CD8-positive, alpha-beta T cell (primary cell): ENCODE measurements at regions of chr5 and their contacts with region 1.

Region 1: DNA sequence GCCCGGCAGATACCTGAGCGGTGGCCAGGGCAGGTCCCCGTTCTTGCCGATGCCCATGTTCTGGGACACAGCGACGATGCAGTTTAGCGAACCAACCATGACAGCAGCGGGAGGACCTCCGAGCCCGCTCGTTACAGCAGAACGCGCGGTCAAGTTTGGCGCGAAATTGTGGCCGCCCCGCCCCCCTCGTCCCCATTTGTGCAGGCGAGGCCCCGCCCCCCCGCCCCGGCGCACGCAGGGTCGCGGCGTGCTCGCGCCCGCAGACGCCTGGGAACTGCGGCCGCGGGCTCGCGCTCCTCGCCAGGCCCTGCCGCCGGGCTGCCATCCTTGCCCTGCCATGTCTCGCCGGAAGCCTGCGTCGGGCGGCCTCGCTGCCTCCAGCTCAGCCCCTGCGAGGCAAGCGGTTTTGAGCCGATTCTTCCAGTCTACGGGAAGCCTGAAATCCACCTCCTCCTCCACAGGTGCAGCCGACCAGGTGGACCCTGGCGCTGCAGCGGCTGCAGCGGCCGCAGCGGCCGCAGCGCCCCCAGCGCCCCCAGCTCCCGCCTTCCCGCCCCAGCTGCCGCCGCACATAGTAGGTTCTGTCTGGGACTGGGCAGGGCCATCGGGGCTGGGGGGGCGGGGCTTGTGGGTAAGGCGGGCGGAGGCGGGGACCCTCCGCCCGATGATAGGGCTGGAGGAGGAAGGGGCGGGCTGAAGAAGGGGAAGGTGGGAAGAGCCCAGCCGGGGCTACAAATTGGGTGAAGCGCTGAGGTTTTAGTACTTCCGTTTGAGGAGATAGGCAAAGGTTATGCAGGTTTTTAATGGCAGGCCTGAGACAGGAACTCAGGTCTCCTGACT is at the starts of genes DHFR and MSH3:
- DNase-seq: peak; percentile 78 to 96 (median 90)
- ATAC-seq: peak; percentile 76
- H3K4me3 ChIP-seq: peak within 1 kb of the TSS; percentile 66 to 83
- H3K4me3 Mint-ChIP-seq: peak within 1 kb of the TSS; percentile 87
- H3K27ac ChIP-seq: peak within 1 kb of the TSS; percentile 71 to 89
- H3K27ac Mint-ChIP-seq: peak within 1 kb of the TSS; percentile 96
- H3K4me1 ChIP-seq: peaks cover 27% of the 10 kb centered on the region
- H3K4me1 Mint-ChIP-seq: peaks cover 27% of the 10 kb centered on the region
- H3K27me3 ChIP-seq: no peaks in the 10 kb centered on the region
- H3K27me3 Mint-ChIP-seq: no peaks in the 10 kb centered on the region
- CTCF ChIP-seq: no peak
- total RNA-seq, gene DHFR: 5.9 TPM
- total RNA-seq, gene MSH3: 8.5 to 8.6 TPM

Region 2: GRCh38 chr5:79514391-79515105 is 1140.1 kb before region 1 on chr5:
- CTCF ChIA-PET with region 1: no interaction called
- POLR2A ChIA-PET with region 1: interaction called, 3 read pairs
- intact Hi-C with region 1: loop called (anchors 2 to 10 kb)
- DNase-seq: peak; percentile 80 to 98 (median 92)
- ATAC-seq: peak; percentile 84
- H3K4me3 ChIP-seq: peak overlapping the region; percentile 62 to 73
- H3K4me3 Mint-ChIP-seq: peak overlapping the region; percentile 99
- H3K27ac ChIP-seq: peak overlapping the region; percentile 91 to 97
- H3K27ac Mint-ChIP-seq: peak overlapping the region; percentile 99
- H3K4me1 ChIP-seq: peaks cover 19% of the 10 kb centered on the region
- H3K4me1 Mint-ChIP-seq: peaks cover 42% of the 10 kb centered on the region
- H3K27me3 ChIP-seq: peaks cover 6 to 7% of the 10 kb centered on the region in 2 experiments
- H3K27me3 Mint-ChIP-seq: peaks cover 5% of the 10 kb centered on the region
- CTCF ChIP-seq: peak; percentile 13

Region 3: GRCh38 chr5:80255732-80256479 is 398.7 kb before region 1 on chr5 and contains the start of gene SERINC5:
- CTCF ChIA-PET with region 1: no interaction called
- POLR2A ChIA-PET with region 1: no interaction called
- intact Hi-C with region 1: loop called in 1 of 2 experiments (anchors 1 kb)
- DNase-seq: peak; percentile 69 to 92 (median 83)
- ATAC-seq: peak; percentile 74
- H3K4me3 ChIP-seq: peak within 1 kb of the TSS; percentile 83 to 91
- H3K4me3 Mint-ChIP-seq: peak within 1 kb of the TSS; percentile 99
- H3K27ac ChIP-seq: peak within 1 kb of the TSS; percentile 89 to 94
- H3K27ac Mint-ChIP-seq: peak within 1 kb of the TSS; percentile 99
- H3K4me1 ChIP-seq: peaks cover 36% of the 10 kb centered on the region
- H3K4me1 Mint-ChIP-seq: peaks cover 57% of the 10 kb centered on the region
- H3K27me3 ChIP-seq: no peaks in the 10 kb centered on the region
- H3K27me3 Mint-ChIP-seq: no peaks in the 10 kb centered on the region
- CTCF ChIP-seq: no peak
- total RNA-seq, gene SERINC5: 112 to 117 TPM

Region 4: GRCh38 chr5:80672140-80672736 is 17.6 kb after region 1 on chr5:
- CTCF ChIA-PET with region 1: interaction called, 6 read pairs
- POLR2A ChIA-PET with region 1: interaction called, 5 read pairs
- intact Hi-C with region 1: loop called (anchors 2 kb)
- DNase-seq: peak in 8 of 9 experiments; percentile 38 to 75 (median 66)
- ATAC-seq: peak; percentile 84
- H3K4me3 ChIP-seq: no peak overlapping the region
- H3K4me3 Mint-ChIP-seq: no peak overlapping the region
- H3K27ac ChIP-seq: no peak overlapping the region
- H3K27ac Mint-ChIP-seq: no peak overlapping the region
- H3K4me1 ChIP-seq: no peaks in the 10 kb centered on the region
- H3K4me1 Mint-ChIP-seq: peaks cover 4% of the 10 kb centered on the region
- H3K27me3 ChIP-seq: no peaks in the 10 kb centered on the region
- H3K27me3 Mint-ChIP-seq: no peaks in the 10 kb centered on the region
- CTCF ChIP-seq: peak; percentile 88

Region 5: DNA sequence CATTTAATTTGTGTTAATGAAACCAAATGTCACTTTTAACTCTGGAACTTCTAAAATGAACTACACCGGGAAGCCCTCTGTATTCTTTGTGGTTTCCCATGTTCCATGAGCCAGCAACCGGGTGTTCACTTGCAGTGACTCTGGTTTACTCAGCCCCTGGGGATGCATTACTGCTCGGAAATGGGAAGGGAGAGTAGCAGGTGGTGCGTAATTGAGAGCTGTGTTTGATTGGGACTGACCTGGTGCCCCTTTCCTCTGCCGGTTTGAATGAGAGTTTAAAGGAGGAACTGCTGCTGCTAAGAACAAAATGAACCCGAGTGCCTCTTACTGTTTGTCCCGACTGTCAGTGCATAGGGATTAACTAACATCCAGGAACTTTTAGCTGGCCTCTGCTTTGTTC is 100.3 kb after region 1 on chr5:
- CTCF ChIA-PET with region 1: no interaction called
- POLR2A ChIA-PET with region 1: no interaction called
- intact Hi-C with region 1: no loop called
- DNase-seq: peak in 1 of 9 experiments; percentile 9
- ATAC-seq: no peak
- H3K4me3 ChIP-seq: peak overlapping the region in 1 of 2 experiments; percentile 15
- H3K4me3 Mint-ChIP-seq: peak overlapping the region; percentile 75
- H3K27ac ChIP-seq: peak overlapping the region; percentile 20 to 80
- H3K27ac Mint-ChIP-seq: peak overlapping the region; percentile 90
- H3K4me1 ChIP-seq: peaks cover 32% of the 10 kb centered on the region
- H3K4me1 Mint-ChIP-seq: peaks cover 54% of the 10 kb centered on the region
- H3K27me3 ChIP-seq: no peaks in the 10 kb centered on the region
- H3K27me3 Mint-ChIP-seq: no peaks in the 10 kb centered on the region
- CTCF ChIP-seq: no peak

Region 6: GRCh38 chr5:81301271-81302015 is 646.8 kb after region 1 on chr5 and contains the start of gene ZCCHC9:
- CTCF ChIA-PET with region 1: no interaction called
- POLR2A ChIA-PET with region 1: interaction called, 6 read pairs
- intact Hi-C with region 1: loop called (anchors 1 to 5 kb)
- DNase-seq: peak; percentile 85 to 98 (median 94)
- ATAC-seq: peak; percentile 87
- H3K4me3 ChIP-seq: peak within 1 kb of the TSS; percentile 75 to 91
- H3K4me3 Mint-ChIP-seq: peak within 1 kb of the TSS; percentile 93
- H3K27ac ChIP-seq: peak within 1 kb of the TSS; percentile 79 to 87
- H3K27ac Mint-ChIP-seq: peak within 1 kb of the TSS; percentile 97
- H3K4me1 ChIP-seq: peaks cover 31% of the 10 kb centered on the region
- H3K4me1 Mint-ChIP-seq: peaks cover 60% of the 10 kb centered on the region
- H3K27me3 ChIP-seq: no peaks in the 10 kb centered on the region
- H3K27me3 Mint-ChIP-seq: no peaks in the 10 kb centered on the region
- CTCF ChIP-seq: no peak
- total RNA-seq, gene ZCCHC9: 14.6 to 15.3 TPM

Region 7: GRCh38 chr5:81971712-81972495 is 1317.3 kb after region 1 on chr5 and contains the start of gene ATG10:
- CTCF ChIA-PET with region 1: no interaction called
- POLR2A ChIA-PET with region 1: no interaction called
- intact Hi-C with region 1: loop called in 1 of 2 experiments (anchors 10 kb)
- DNase-seq: peak; percentile 75 to 95 (median 86)
- ATAC-seq: peak; percentile 85
- H3K4me3 ChIP-seq: peak within 1 kb of the TSS; percentile 85 to 99
- H3K4me3 Mint-ChIP-seq: peak within 1 kb of the TSS; percentile 100
- H3K27ac ChIP-seq: peak within 1 kb of the TSS; percentile 96 to 97
- H3K27ac Mint-ChIP-seq: peak within 1 kb of the TSS; percentile 100
- H3K4me1 ChIP-seq: peaks cover 12% of the 10 kb centered on the region
- H3K4me1 Mint-ChIP-seq: peaks cover 31% of the 10 kb centered on the region
- H3K27me3 ChIP-seq: no peaks in the 10 kb centered on the region
- H3K27me3 Mint-ChIP-seq: no peaks in the 10 kb centered on the region
- CTCF ChIP-seq: no peak
- total RNA-seq, gene ATG10: 4.7 to 5.7 TPM